GM12878 (cell line): ENCODE measurements at regions of chr4 and their contacts with region 1.

Region 1: GRCh38 chr4:110510955-110511544 is 35.1 kb downstream of the ENPEP start:
- DNase-seq: no peak
- ATAC-seq: peak; percentile 86
- H3K4me3 ChIP-seq: no peak overlapping the region
- H3K27ac ChIP-seq: no peak overlapping the region
- H3K4me1 ChIP-seq: no peaks in the 10 kb centered on the region
- H3K27me3 ChIP-seq: no peaks in the 10 kb centered on the region
- CTCF ChIP-seq: peak; percentile 53 to 70 (median 53); a peak in 5 of 6 replicates
- EP300 ChIP-seq: no peak
- POLR2A ChIP-seq: no peak
- RAD21 ChIP-seq: peak; percentile 75

Region 2: DNA sequence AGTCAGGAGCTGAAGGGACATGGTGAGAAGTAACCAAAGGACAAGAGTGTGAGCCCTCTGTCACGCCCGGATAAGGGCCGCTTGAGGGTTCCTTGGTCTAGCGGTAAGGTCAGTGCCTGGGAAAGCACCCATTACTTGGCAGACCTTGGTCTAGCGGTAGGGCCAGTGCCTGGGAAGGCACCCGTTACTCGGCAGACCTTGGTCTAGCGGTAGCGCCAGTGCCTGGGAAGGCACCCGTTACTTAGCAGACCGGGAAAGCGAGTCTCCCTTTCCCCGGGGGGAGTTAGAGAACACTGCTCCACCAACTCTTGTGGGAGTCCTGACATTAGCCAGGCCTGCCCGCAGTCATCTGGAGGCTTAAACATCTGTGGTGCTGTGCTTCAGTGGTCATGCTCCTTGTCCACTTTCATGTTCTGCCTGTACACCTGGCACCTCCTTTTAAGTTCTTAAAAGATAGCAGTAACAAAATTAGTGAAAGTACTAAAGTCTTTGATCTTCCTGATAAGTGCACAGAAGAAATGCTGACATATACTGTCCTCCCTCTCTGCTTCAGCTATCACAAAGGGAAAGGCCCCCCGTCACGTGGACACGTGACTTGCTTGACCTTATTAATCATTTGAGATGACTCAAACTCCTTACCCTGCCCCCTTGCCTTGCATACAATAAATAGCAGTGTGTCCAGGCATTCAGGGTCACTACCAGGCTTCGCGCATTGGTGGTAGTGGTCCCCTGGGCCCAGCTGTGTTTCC is 1086.8 kb before region 1 on chr4:
- CTCF ChIA-PET with region 1: no interaction called
- POLR2A ChIA-PET with region 1: no interaction called
- RAD21 ChIA-PET with region 1: no interaction called
- SMC1A ChIA-PET with region 1: no interaction called
- in situ Hi-C with region 1: loop called (anchors 10 kb)
- intact Hi-C with region 1: loop called (anchors 5 kb)
- DNase-seq: no peak
- ATAC-seq: peak; percentile 68
- H3K4me3 ChIP-seq: no peak overlapping the region
- H3K27ac ChIP-seq: no peak overlapping the region
- H3K4me1 ChIP-seq: no peaks in the 10 kb centered on the region
- H3K27me3 ChIP-seq: no peaks in the 10 kb centered on the region
- CTCF ChIP-seq: no peak
- EP300 ChIP-seq: no peak
- POLR2A ChIP-seq: no peak
- RAD21 ChIP-seq: no peak

Region 3: DNA sequence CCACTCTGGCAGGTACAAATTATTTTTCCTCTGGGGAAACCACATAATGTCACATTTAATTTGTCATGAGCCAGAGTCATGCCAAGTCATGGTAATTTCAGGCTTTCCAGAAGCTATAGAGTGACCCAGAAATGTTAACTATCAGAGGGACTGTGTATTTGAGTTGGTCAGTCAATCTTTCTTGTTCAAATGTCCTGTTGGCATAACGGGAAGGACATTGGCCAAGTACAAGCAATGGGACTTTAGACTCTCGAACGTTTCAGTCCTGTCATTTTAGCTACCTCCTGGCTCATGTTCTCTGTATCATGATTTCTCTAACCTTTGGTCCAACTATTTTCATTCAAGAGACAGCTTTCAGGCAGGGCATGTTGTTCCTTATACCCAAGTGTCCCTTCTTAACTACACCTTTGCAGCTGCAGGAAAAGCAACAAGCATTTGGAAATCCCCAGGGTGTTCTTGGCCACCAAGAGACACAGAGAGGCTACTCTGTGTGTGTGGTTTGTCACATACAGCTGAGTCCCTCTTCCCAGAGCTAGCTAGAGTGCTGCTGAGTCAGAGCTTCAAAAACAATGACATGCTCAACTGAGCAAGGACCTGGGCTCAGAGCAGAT is 455.8 kb before region 1 on chr4:
- CTCF ChIA-PET with region 1: interaction called, 132 read pairs
- POLR2A ChIA-PET with region 1: no interaction called
- RAD21 ChIA-PET with region 1: interaction called, 30 read pairs
- SMC1A ChIA-PET with region 1: interaction called, 14 read pairs
- in situ Hi-C with region 1: no loop called
- intact Hi-C with region 1: loop called (anchors 2 kb)
- DNase-seq: peak; percentile 80
- ATAC-seq: peak; percentile 93
- H3K4me3 ChIP-seq: peak overlapping the region; percentile 39; the same call in 1 of the 2 replicates
- H3K27ac ChIP-seq: peak overlapping the region; percentile 68
- H3K4me1 ChIP-seq: peaks cover 25% of the 10 kb centered on the region
- H3K27me3 ChIP-seq: no peaks in the 10 kb centered on the region
- CTCF ChIP-seq: no peak
- EP300 ChIP-seq: 0 out of 4 replicates have a peak, but pooled peaks of 1 of the 2 experiments have one; percentile 31
- POLR2A ChIP-seq: no peak
- RAD21 ChIP-seq: no peak

Region 4: GRCh38 chr4:110201502-110201901 is 309.5 kb before region 1 on chr4:
- CTCF ChIA-PET with region 1: interaction called, 7 read pairs
- POLR2A ChIA-PET with region 1: no interaction called
- RAD21 ChIA-PET with region 1: no interaction called
- SMC1A ChIA-PET with region 1: interaction called, 3 read pairs
- in situ Hi-C with region 1: loop called (anchors 10 kb)
- intact Hi-C with region 1: loop called (anchors 5 kb)
- DNase-seq: no peak
- ATAC-seq: no peak
- H3K4me3 ChIP-seq: no peak overlapping the region
- H3K27ac ChIP-seq: no peak overlapping the region
- H3K4me1 ChIP-seq: 0 out of 2 replicates have a peak, but pooled peaks cover 4% of the 10 kb centered on the region
- H3K27me3 ChIP-seq: no peaks in the 10 kb centered on the region
- CTCF ChIP-seq: no peak
- EP300 ChIP-seq: no peak
- POLR2A ChIP-seq: no peak
- RAD21 ChIP-seq: no peak

Region 5: GRCh38 chr4:110310795-110311194 is 200.3 kb before region 1 on chr4:
- CTCF ChIA-PET with region 1: interaction called, 118 read pairs
- POLR2A ChIA-PET with region 1: no interaction called
- RAD21 ChIA-PET with region 1: interaction called, 47 read pairs
- SMC1A ChIA-PET with region 1: interaction called, 91 read pairs
- in situ Hi-C with region 1: loop called (anchors 5 kb)
- intact Hi-C with region 1: loop called (anchors 1 kb)
- DNase-seq: peak; percentile 17
- ATAC-seq: peak; percentile 88
- H3K4me3 ChIP-seq: no peak overlapping the region
- H3K27ac ChIP-seq: no peak overlapping the region
- H3K4me1 ChIP-seq: no peaks in the 10 kb centered on the region
- H3K27me3 ChIP-seq: no peaks in the 10 kb centered on the region
- CTCF ChIP-seq: no peak
- EP300 ChIP-seq: no peak
- POLR2A ChIP-seq: no peak
- RAD21 ChIP-seq: no peak

Region 6: DNA sequence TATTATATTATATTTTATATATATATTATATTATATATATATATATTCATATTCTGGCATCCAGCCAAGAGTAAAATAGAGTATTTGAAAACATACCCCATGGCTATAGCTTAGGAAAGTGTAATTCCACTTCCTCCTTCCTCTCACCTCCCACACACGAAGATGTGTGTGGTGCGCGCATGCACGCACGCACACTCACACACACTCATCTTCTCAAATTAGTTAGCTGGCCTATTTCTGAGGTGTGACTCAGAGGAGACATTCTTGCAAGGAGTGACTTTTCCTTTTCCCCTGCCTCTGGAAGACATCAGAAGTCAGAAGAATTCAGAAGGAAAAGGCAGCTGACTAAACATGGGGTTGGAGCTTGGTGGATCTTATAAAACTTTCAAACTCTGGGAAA is 26.3 kb before region 1 on chr4:
- CTCF ChIA-PET with region 1: interaction called, 12 read pairs
- POLR2A ChIA-PET with region 1: no interaction called
- RAD21 ChIA-PET with region 1: interaction called, 6 read pairs
- SMC1A ChIA-PET with region 1: interaction called, 11 read pairs
- in situ Hi-C with region 1: no loop called
- intact Hi-C with region 1: no loop called
- DNase-seq: no peak
- ATAC-seq: no peak
- H3K4me3 ChIP-seq: no peak overlapping the region
- H3K27ac ChIP-seq: no peak overlapping the region; the same call in 1 of the 2 replicates
- H3K4me1 ChIP-seq: peaks cover 13% of the 10 kb centered on the region
- H3K27me3 ChIP-seq: no peaks in the 10 kb centered on the region
- CTCF ChIP-seq: no peak
- EP300 ChIP-seq: no peak
- POLR2A ChIP-seq: no peak
- RAD21 ChIP-seq: no peak